IMR-90 (cell line): ENCODE measurements at regions of chr16 and their contacts with region 1.

Region 1: GRCh38 chr16:88785106-88785924 is at the start of gene PIEZO1:
- DNase-seq: peak; percentile 52
- ATAC-seq: peak; percentile 68
- H3K4me3 ChIP-seq: peak within 1 kb of the TSS; percentile 92
- H3K27ac ChIP-seq: peak within 1 kb of the TSS; percentile 82
- H3K4me1 ChIP-seq: peaks cover 34% of the 10 kb centered on the region
- H3K27me3 ChIP-seq: no peaks in the 10 kb centered on the region
- CTCF ChIP-seq: peak; percentile 92
- POLR2A ChIP-seq: peak; percentile 94
- RAD21 ChIP-seq: peak; percentile 87
- total RNA-seq, gene PIEZO1: 36.2 and 48.6 TPM in 2 replicates

Region 2: DNA sequence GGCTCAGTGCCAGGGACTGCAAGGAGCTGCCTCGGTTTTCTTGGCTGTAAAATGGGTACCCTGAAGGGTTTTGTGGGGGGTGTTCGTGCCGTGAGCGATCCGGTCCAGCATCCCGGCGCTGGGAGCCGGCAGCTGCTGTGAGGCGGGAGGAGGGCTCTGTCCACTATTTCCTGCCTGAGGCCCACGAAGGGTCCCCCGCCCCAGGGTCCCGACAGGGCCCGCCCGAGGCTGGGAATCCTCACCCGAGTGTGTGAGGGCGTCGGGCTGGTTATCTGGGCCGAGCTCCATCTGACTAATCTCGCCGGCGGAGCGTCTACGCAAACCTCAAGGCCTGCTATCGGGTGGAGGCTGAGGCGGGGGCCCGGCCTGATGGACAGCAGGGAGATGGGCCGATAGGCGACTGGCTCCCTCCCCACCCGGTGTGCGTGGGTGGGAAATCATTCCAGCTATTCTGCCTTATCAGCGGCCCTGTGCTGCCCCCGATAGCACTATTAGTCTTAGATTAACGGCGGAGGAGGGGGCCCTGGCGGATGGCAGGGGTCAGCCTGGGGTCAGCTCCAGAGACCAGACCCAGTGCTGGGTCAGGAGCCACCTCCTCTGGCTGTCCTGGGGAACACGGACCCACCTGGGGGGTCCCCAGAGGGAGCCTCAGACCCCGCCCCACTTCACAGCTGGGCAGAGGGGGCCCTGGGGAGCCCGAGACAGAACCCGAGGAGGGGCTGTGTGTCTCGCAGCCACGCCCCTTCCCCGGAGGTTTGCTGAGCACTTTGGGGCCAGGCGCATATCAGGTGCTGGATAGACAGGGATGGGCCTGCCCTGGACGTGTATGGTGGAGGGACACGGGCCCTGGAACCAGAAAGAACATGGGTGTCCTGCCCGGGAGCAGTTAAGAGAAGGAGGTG is 287.5 kb before region 1 on chr16:
- CTCF ChIA-PET with region 1: no interaction called
- POLR2A ChIA-PET with region 1: no interaction called
- dilution Hi-C with region 1: no loop called
- in situ Hi-C with region 1: no loop called
- intact Hi-C with region 1: no loop called
- DNase-seq: peak; percentile 21
- ATAC-seq: no peak
- H3K4me3 ChIP-seq: no peak overlapping the region
- H3K27ac ChIP-seq: no peak overlapping the region
- H3K4me1 ChIP-seq: no peaks in the 10 kb centered on the region
- H3K27me3 ChIP-seq: no peaks in the 10 kb centered on the region
- CTCF ChIP-seq: no peak
- POLR2A ChIP-seq: no peak
- RAD21 ChIP-seq: no peak

Region 3: DNA sequence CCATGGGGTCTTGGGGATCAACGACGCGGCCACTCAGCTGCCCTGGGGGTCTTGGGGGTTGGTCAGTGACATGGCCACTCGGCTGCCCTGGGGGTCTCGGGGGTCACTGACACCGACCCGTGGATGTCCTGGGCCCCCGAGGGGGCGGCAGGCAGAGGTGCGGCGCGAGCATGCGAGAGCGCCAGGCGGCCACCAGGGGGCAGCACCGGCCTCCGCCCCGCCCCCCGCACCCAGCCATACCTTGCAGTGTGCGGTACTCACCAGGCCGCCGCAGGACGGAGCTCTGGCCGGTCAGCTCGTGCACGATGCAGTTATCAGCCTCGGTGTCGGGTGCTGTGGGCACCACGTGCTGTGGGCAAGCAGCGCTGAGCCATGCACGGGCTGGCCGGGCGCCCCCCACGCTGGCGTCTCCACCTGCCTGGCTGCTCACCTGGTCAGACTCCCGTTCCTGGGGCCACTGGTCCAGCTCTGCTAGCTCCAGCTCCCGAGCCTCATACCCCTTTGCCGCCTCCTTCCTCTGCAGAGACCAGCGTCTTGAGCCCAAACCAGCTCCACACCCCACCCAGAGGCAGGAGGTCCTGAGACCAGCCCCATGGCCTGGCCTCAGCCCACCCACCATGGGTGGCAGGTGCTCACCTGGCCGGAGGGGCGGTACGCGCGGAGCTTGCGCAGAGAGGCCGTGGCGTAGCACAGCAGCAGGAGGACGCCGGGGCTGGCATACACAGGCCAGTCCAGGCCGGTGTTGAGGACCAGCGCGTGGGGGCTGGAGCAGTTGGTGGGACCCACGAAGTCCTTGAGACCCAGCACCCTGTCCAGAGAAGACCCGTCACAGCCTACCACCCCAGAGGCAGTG is 47.8 kb before region 1 on chr16:
- CTCF ChIA-PET with region 1: interaction called, 5 read pairs
- POLR2A ChIA-PET with region 1: no interaction called
- dilution Hi-C with region 1: no loop called
- in situ Hi-C with region 1: no loop called
- intact Hi-C with region 1: loop called (anchors 1 kb)
- DNase-seq: peak; percentile 70
- ATAC-seq: peak; percentile 94
- H3K4me3 ChIP-seq: no peak overlapping the region
- H3K27ac ChIP-seq: no peak overlapping the region
- H3K4me1 ChIP-seq: no peaks in the 10 kb centered on the region
- H3K27me3 ChIP-seq: no peaks in the 10 kb centered on the region
- CTCF ChIP-seq: peak; percentile 99
- POLR2A ChIP-seq: no peak
- RAD21 ChIP-seq: peak; percentile 72

Region 4: GRCh38 chr16:88743693-88744576 is 41.4 kb before region 1 on chr16:
- CTCF ChIA-PET with region 1: no interaction called
- POLR2A ChIA-PET with region 1: no interaction called
- dilution Hi-C with region 1: no loop called
- in situ Hi-C with region 1: loop called (anchors 5 kb)
- intact Hi-C with region 1: loop called (anchors 1 kb)
- DNase-seq: peak; percentile 55
- ATAC-seq: peak; percentile 90
- H3K4me3 ChIP-seq: no peak overlapping the region
- H3K27ac ChIP-seq: no peak overlapping the region
- H3K4me1 ChIP-seq: no peaks in the 10 kb centered on the region
- H3K27me3 ChIP-seq: no peaks in the 10 kb centered on the region
- CTCF ChIP-seq: peak; percentile 82
- POLR2A ChIP-seq: no peak
- RAD21 ChIP-seq: peak; percentile 70